ENCODE measurements at regions of chr15 and their contacts with region 1.

Region 1: DNA sequence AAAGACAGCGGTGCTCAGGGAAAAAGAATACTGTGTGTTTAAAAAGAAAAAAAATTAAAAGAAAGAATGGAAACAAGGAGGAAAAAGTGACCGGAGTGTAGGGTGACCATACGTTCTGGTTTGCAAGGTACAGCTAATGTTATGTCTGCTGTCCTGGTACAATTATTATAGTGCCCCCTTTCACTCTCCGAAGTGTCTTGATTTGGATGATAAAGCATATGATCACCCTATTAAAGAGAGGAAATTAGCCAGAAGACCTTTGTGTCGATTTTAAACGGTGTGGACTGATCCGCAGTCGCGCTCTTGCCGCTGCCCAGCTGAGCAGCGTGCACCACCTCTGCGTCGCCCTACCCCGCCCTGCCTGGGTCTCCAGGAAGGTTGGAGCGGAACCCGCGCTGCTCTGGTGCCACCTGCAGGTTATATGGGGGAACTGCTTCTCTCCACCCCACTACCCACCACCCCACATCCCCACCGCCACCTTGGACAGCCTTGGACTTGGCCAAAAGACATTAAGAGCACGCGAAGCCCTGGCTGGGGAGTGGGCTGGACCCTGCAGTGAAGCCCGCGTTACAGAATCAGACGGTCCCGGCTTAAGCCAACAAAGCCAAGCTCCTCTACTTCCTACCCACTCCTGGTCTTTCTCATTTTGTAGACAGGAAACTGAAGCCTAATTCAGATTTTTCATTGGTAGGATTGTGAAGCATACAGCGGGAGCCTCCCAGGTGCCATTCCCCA is 41.2 kb upstream of the UBE2Q2 start:
- DNase-seq: no peak
- H3K4me3 ChIP-seq: peak overlapping the region; percentile 32
- H3K27me3 ChIP-seq: peaks cover 15% of the 10 kb centered on the region
- CTCF ChIP-seq: peak; percentile 90

Region 2: DNA sequence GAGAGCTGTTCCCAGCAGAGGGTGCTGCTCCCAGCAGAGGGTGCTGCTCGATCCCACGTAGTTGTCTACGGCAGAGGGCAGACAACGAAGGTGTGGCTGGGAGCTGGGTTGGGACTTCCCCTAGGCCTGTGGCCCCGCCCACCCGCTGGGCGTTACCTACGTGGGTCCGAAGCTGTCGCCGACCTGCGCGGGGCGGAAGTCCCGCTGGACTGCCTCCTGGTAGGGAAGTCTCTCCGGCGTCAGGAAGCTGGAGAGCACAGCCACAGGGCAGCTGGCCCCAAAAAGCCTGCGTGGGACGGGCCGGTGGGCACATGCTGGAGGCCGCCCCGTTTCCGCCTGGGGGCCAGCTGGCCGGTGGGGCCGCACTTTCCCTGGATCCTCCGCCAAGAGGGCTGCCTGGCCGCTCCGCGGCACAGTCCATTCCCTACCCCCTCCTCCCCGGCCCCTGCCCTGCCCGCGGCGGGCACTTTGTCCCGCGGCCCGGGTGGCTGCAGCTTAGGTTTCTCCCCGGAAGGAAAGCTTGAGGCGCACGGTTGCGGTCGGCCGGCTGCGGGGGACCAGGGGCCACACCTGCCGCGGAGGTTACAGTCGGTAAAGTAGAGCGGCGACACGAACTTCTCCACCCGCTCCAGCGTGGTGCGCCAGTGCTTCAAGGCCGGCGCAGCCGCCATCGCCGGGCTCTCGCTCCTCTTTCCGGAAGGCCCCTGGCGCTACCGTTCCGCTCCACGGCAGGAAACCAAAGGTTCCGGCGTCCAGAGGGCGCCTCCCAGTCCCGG is 433.9 kb before region 1 on chr15 and contains the start of gene MAN2C1:
- CTCF ChIA-PET with region 1: interaction called, 12 read pairs
- POLR2A ChIA-PET with region 1: no interaction called
- DNase-seq: peak; percentile 75
- H3K4me3 ChIP-seq: peak within 1 kb of the TSS; percentile 87
- H3K27me3 ChIP-seq: no peaks in the 10 kb centered on the region
- CTCF ChIP-seq: peak; percentile 77
- polyA plus RNA-seq, gene MAN2C1: 42.5 and 82.5 TPM in 2 replicates

Region 3: DNA sequence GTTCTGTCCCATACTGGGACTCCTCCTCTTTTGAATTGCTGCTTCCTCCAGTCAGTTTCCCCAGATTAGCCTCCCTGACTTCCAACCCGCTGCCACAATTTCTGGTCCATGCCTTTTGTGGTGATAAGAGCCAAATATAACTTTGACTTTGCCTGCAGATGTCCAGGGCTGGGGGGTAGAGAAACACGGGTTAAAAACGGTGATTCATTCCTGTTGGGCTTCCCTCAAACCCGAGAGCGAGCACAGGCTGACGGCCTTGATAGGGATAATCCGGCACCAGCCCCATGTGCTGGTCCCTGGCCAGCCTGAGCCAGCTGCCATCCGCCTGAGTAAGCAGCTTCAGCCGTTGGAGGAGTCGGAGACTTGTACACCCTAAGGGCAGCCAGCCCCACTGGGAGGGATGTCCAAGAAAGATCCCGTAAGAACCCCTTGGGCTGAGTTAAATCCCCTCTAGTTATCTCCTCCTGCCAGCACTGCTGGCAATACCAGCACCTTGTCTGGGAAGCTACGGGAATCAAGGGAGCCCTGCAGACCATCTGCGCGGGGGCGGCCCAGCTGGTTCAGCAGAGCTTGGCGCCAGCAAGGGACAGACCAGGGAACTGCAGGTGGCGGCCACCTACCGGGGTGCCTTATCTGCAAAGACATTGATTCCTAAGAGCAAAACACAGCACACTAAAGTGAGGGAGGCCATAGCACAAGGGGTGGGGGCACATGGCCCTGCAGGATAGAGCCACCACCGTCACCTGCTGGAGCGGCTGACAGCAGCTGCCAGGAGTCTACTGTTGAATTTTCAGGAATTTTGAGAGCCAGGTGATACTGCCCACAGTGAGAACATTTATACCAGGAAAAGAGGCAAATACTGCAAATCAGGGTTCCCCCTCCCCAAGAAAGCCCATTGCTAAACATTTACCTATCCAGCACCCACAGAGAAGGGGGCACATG is 107.5 kb before region 1 on chr15:
- CTCF ChIA-PET with region 1: interaction called, 23 read pairs
- POLR2A ChIA-PET with region 1: no interaction called
- DNase-seq: peak; percentile 95
- H3K4me3 ChIP-seq: no peak overlapping the region
- H3K27me3 ChIP-seq: no peaks in the 10 kb centered on the region
- CTCF ChIP-seq: peak; percentile 58

Region 4: GRCh38 chr15:75732809-75733451 is 69.1 kb before region 1 on chr15:
- CTCF ChIA-PET with region 1: interaction called, 23 read pairs
- POLR2A ChIA-PET with region 1: no interaction called
- DNase-seq: no peak
- H3K4me3 ChIP-seq: no peak overlapping the region
- H3K27me3 ChIP-seq: no peaks in the 10 kb centered on the region
- CTCF ChIP-seq: peak; percentile 90

Region 5: GRCh38 chr15:75786575-75786947 is 15.5 kb before region 1 on chr15:
- CTCF ChIA-PET with region 1: interaction called, 10 read pairs
- POLR2A ChIA-PET with region 1: no interaction called
- DNase-seq: no peak
- H3K4me3 ChIP-seq: no peak overlapping the region
- H3K27me3 ChIP-seq: peaks cover 26% of the 10 kb centered on the region
- CTCF ChIP-seq: no peak

Region 6: GRCh38 chr15:75861750-75862402 is 59.9 kb after region 1 on chr15:
- CTCF ChIA-PET with region 1: no interaction called
- POLR2A ChIA-PET with region 1: no interaction called
- DNase-seq: no peak
- H3K4me3 ChIP-seq: no peak overlapping the region
- H3K27me3 ChIP-seq: no peaks in the 10 kb centered on the region
- CTCF ChIP-seq: no peak